ENCODE measurements at regions of chrX and their contacts with region 1.

Region 1: GRCh38 chrX:3811331-3812311 is 98.2 kb upstream of the PRKX start:
- DNase-seq: peak; percentile 82
- H3K4me3 Mint-ChIP-seq: peak overlapping the region; percentile 57
- H3K27ac Mint-ChIP-seq: peak overlapping the region; percentile 87
- H3K4me1 Mint-ChIP-seq: peaks cover 12% of the 10 kb centered on the region
- H3K27me3 Mint-ChIP-seq: peaks cover 27% of the 10 kb centered on the region

Region 2: GRCh38 chrX:3037218-3037617 is 774.4 kb before region 1 on chrX:
- intact Hi-C with region 1: loop called (anchors 1 kb)
- DNase-seq: no peak
- H3K4me3 Mint-ChIP-seq: no peak overlapping the region
- H3K27ac Mint-ChIP-seq: no peak overlapping the region
- H3K4me1 Mint-ChIP-seq: no peaks in the 10 kb centered on the region
- H3K27me3 Mint-ChIP-seq: no peaks in the 10 kb centered on the region

Region 3: DNA sequence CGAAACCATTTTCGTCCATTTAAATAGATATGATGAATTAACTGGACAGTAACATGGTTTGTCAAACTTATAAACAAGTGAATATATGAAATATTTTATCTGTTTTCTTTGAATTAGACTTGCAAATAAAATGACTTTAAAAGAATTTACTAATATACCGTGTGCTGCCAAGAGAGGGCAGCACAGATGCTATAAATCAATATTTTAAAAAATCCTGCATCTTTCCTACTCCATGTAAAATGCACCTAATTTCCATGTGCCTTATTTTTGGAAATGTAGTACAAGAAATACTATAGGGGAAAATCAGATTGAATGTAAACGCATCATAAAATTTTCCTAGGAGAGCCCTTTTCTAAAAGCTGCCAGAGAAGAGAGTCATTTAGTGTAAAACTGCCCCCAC is 160.3 kb before region 1 on chrX:
- intact Hi-C with region 1: loop called (anchors 1 kb)
- DNase-seq: peak; percentile 55
- H3K4me3 Mint-ChIP-seq: no peak overlapping the region
- H3K27ac Mint-ChIP-seq: no peak overlapping the region
- H3K4me1 Mint-ChIP-seq: peaks cover 9% of the 10 kb centered on the region
- H3K27me3 Mint-ChIP-seq: no peaks in the 10 kb centered on the region

Region 4: GRCh38 chrX:3713225-3713936 is 98.2 kb before region 1 on chrX and contains the start of gene PRKX:
- intact Hi-C with region 1: loop called (anchors 1 kb)
- DNase-seq: peak; percentile 93
- H3K4me3 Mint-ChIP-seq: peak within 1 kb of the TSS; percentile 97
- H3K27ac Mint-ChIP-seq: peak within 1 kb of the TSS; percentile 94
- H3K4me1 Mint-ChIP-seq: peaks cover 8% of the 10 kb centered on the region
- H3K27me3 Mint-ChIP-seq: no peaks in the 10 kb centered on the region
- total RNA-seq, gene PRKX: 61.3 and 62.3 TPM in 2 replicates